KBM-7 (cell line): ENCODE measurements at regions of chrX and their contacts with region 1.

Region 1: GRCh38 chrX:68511255-68511654 is 12.4 kb downstream of the YIPF6 start:
- DNase-seq: peak; percentile 59

Region 2: GRCh38 chrX:67953658-67954057 is 557.6 kb before region 1 on chrX:
- in situ Hi-C with region 1: no loop called
- DNase-seq: no peak

Region 3: GRCh38 chrX:68345025-68345424 is 166.2 kb before region 1 on chrX:
- in situ Hi-C with region 1: no loop called
- DNase-seq: peak; percentile 22

Region 4: DNA sequence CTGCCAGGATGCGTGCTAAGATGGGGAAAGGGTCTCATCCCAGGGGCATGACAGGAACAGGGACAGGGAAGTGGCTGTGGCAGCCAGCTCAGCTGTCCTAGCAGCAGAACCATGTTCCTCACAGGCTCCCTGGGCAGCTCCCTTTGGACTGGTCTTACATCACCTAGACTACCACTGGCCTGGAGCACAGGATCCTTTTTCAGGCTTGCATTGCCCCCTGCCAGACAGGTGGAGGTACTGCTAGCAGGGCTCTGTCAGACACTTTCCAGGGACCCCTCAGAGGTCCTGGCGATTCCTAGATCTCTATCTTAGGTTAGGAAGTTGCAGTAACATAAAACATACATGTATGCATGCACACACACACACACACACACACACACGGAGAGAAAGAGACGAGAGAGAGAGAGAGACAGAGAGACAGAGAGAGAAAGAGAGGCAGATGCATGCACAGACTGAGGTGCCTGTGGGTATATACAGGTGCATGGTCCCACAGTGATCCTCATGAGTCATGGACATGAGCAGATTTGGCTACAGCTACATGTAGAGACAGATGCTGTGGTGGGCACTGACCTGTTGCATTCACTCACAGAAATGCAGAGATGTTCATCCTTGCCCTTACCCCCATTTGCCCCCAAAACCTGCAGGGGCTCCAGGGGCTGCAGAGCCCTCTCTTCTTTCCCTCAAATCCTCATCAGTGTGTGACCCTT is 199.8 kb after region 1 on chrX:
- in situ Hi-C with region 1: loop called (anchors 25 kb)
- DNase-seq: peak; percentile 57

Region 5: DNA sequence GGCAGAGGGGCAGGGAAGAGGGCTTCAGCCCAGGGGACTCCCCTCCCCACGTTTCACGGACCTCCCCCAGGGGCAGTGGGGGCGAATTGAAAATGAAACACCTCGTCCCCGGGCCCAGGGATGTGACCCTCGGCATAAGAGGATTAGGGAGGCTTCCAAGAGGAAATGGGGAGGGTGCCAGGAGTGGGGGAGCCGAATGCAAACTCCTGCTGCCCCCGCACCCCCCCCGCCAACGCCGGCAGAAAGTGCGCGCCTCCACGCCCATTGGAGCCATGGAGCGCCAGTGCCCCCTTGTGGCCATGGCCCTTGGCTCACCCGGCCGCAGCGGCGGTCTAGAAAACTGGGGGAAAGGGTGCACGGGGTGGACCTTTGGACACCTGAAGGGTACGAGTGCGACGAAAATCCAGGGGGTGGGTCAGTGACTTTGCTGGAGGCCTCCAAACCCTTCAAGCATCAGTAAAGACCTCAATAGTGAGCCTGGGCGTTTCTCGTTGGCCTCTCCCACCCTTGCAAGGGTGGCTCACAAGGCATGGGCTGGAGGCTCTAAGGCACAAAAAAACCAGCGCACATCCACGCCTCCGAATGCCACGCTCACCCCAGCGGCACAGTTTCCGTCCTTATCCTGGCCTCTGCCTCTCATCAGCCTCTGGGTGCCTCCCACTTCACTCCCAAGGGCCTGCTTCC is 774.8 kb after region 1 on chrX:
- in situ Hi-C with region 1: no loop called
- DNase-seq: peak; percentile 46